ENCODE measurements at regions of chr1 and their contacts with region 1.

Region 1: DNA sequence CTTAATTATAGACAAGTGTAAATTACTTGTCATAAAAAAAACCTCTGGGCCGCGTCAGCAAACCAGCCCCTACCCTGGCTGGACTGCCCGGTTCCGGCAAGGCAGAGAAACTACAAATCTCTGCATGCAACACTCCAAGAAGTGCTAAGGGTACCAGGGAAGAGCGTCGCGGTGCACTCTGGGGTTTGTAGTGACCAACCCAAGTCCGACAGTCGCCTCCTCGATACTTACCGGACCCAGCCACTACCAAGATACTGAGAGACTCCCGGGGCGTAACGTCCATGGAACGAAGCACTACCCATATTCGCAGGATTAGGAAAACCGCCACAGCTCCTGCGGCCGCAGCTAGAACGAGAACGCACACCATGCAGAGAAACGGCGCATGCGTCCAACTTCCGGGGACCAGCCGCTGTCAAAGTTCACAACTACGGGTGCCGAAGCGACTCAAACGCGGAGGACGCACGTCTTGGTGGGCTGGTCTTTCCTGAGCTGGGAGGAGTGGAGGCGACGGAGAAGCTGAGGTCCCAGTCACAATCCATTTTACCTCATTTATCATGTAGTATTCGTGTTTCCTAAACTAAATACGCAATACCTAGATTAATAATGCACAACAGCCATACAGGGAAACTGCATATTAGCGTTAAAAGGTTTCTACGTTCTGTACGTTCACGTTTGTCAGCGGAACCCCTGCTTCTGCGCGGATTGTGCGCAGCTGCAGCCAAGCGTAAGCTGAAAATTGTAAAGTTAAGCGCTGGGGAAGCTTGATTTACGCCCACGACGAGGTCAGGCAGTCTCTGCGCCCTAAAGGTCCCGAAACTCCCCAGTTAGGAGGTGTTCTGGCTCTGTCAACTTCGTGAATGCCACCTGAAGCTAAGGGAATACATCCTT is at the start of gene ALG14:
- DNase-seq: peak; percentile 89 to 94 (median 92)
- H3K4me3 ChIP-seq: peak within 1 kb of the TSS; percentile 47 to 92 (median 77)
- H3K27ac ChIP-seq: peak within 1 kb of the TSS; percentile 85 to 100 (median 98)
- H3K27me3 ChIP-seq: no peaks in the 10 kb centered on the region
- CTCF ChIP-seq: peak in 31 of 56 donors; percentile 2 to 54 (median 19)
- total RNA-seq, gene ALG14: 2.4 to 18.5 (median 8.3) TPM

Region 2: GRCh38 chr1:95084317-95085176 is 11.8 kb after region 1 on chr1:
- intact Hi-C with region 1: loop called in 1 of 2 experiments (anchors 1 kb)
- DNase-seq: peak in 2 of 10 donors; percentile 17 to 33
- H3K4me3 ChIP-seq: no peak overlapping the region
- H3K27ac ChIP-seq: no peak overlapping the region
- H3K27me3 ChIP-seq: no peaks in the 10 kb centered on the region
- CTCF ChIP-seq: peak; percentile 29 to 81 (median 65)

Region 3: GRCh38 chr1:95116580-95117206 is 43.9 kb after region 1 on chr1:
- intact Hi-C with region 1: loop called (anchors 2 to 5 kb)
- DNase-seq: peak in 9 of 10 donors; percentile 53 to 74 (median 61)
- H3K4me3 ChIP-seq: peak overlapping the region; percentile 41 to 92 (median 77)
- H3K27ac ChIP-seq: peak overlapping the region in 57 of 59 donors; percentile 20 to 92 (median 76)
- H3K27me3 ChIP-seq: no peaks in the 10 kb centered on the region
- CTCF ChIP-seq: peak; percentile 13 to 71 (median 49)

Region 4: GRCh38 chr1:95226781-95227660 is 154.2 kb after region 1 on chr1:
- intact Hi-C with region 1: loop called in 1 of 2 experiments (anchors 2 kb)
- DNase-seq: no peak
- H3K4me3 ChIP-seq: peak overlapping the region in 29 of 59 donors; percentile 1 to 51 (median 27)
- H3K27ac ChIP-seq: peak overlapping the region in 51 of 59 donors; percentile 0 to 95 (median 71)
- H3K27me3 ChIP-seq: no peaks in the 10 kb centered on the region
- CTCF ChIP-seq: no peak